GM12878 (cell line): ENCODE measurements at regions of chr12 and their contacts with region 1.

Region 1: GRCh38 chr12:111451649-111452129 is 46.0 kb downstream of the SH2B3 start:
- DNase-seq: no peak
- ATAC-seq: peak; percentile 73
- H3K4me3 ChIP-seq: no peak overlapping the region
- H3K27ac ChIP-seq: no peak overlapping the region
- H3K4me1 ChIP-seq: peaks cover 37% of the 10 kb centered on the region
- H3K27me3 ChIP-seq: no peaks in the 10 kb centered on the region
- CTCF ChIP-seq: peak; percentile 61 to 81 (median 73)
- EP300 ChIP-seq: no peak
- POLR2A ChIP-seq: 0 out of 2 replicates have a peak, but pooled peaks have one; percentile 25
- RAD21 ChIP-seq: peak; percentile 92

Region 2: GRCh38 chr12:110869026-110869425 is 582.7 kb before region 1 on chr12:
- CTCF ChIA-PET with region 1: no interaction called
- POLR2A ChIA-PET with region 1: no interaction called
- RAD21 ChIA-PET with region 1: no interaction called
- SMC1A ChIA-PET with region 1: no interaction called
- in situ Hi-C with region 1: no loop called
- intact Hi-C with region 1: no loop called
- DNase-seq: no peak
- ATAC-seq: no peak
- H3K4me3 ChIP-seq: no peak overlapping the region
- H3K27ac ChIP-seq: no peak overlapping the region
- H3K4me1 ChIP-seq: no peaks in the 10 kb centered on the region
- H3K27me3 ChIP-seq: no peaks in the 10 kb centered on the region; a peak in 1 of 4 replicates
- CTCF ChIP-seq: no peak
- EP300 ChIP-seq: no peak
- POLR2A ChIP-seq: no peak
- RAD21 ChIP-seq: no peak

Region 3: GRCh38 chr12:111224186-111225066 is 227.3 kb before region 1 on chr12:
- CTCF ChIA-PET with region 1: no interaction called
- POLR2A ChIA-PET with region 1: no interaction called
- RAD21 ChIA-PET with region 1: no interaction called
- SMC1A ChIA-PET with region 1: no interaction called
- in situ Hi-C with region 1: no loop called
- intact Hi-C with region 1: no loop called
- DNase-seq: no peak
- ATAC-seq: no peak
- H3K4me3 ChIP-seq: no peak overlapping the region
- H3K27ac ChIP-seq: no peak overlapping the region
- H3K4me1 ChIP-seq: no peaks in the 10 kb centered on the region
- H3K27me3 ChIP-seq: peaks cover 3% of the 10 kb centered on the region in 2 experiments; a peak in 3 of 4 replicates
- CTCF ChIP-seq: no peak
- EP300 ChIP-seq: no peak
- POLR2A ChIP-seq: no peak
- RAD21 ChIP-seq: no peak

Region 4: DNA sequence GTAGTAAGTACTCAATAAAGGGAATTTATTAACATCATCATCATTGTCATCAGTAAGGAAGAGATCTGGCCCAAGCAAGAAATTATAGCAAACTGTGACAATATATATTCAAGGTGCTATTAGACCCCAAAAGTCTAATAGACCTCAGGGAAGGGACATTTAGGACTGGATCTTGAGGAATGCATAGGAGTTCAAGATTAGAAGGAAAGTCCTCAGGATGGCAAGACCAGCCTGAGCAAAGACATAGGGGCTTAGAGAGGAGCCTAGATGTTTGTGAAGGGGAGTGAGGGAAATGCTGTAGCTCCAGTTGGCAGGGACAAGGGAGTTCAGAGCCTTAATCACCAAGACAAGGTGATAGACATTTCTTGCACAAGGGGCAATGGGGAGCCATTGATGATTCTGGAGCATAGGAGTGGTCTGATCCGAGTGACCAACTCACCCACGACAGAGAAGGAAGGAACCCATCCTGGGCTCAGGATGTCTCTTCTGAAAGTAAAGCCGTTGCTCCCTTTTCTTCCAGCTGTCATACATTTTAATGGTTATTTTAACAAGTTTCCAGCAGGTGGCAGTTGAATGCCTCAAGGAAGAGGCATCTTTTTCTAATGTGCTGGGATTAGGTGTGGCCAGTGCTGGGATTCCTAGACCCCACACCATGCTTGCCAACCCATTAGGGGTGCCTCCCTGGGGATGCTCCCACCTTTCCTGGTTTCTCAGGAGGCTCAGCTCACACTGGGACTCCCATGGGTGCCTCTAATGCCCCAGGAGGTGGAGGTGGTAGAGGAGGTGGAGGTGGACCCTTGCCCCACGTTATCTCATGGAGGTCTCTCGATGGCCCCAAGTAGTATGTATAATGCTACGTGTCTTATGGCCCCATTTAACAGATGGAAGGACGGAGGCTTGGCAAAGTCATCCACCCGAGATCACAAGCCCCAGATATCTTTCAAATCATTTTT is 120.6 kb before region 1 on chr12:
- CTCF ChIA-PET with region 1: interaction called, 18 read pairs
- POLR2A ChIA-PET with region 1: no interaction called
- RAD21 ChIA-PET with region 1: interaction called, 16 read pairs
- SMC1A ChIA-PET with region 1: interaction called, 7 read pairs
- in situ Hi-C with region 1: loop called (anchors 5 kb)
- intact Hi-C with region 1: loop called (anchors 2 kb)
- DNase-seq: no peak
- ATAC-seq: peak; percentile 69
- H3K4me3 ChIP-seq: no peak overlapping the region
- H3K27ac ChIP-seq: no peak overlapping the region
- H3K4me1 ChIP-seq: no peaks in the 10 kb centered on the region
- H3K27me3 ChIP-seq: no peaks in the 10 kb centered on the region; a peak in 2 of 4 replicates
- CTCF ChIP-seq: peak; percentile 50 to 62 (median 53)
- EP300 ChIP-seq: no peak
- POLR2A ChIP-seq: no peak
- RAD21 ChIP-seq: peak; percentile 54

Region 5: DNA sequence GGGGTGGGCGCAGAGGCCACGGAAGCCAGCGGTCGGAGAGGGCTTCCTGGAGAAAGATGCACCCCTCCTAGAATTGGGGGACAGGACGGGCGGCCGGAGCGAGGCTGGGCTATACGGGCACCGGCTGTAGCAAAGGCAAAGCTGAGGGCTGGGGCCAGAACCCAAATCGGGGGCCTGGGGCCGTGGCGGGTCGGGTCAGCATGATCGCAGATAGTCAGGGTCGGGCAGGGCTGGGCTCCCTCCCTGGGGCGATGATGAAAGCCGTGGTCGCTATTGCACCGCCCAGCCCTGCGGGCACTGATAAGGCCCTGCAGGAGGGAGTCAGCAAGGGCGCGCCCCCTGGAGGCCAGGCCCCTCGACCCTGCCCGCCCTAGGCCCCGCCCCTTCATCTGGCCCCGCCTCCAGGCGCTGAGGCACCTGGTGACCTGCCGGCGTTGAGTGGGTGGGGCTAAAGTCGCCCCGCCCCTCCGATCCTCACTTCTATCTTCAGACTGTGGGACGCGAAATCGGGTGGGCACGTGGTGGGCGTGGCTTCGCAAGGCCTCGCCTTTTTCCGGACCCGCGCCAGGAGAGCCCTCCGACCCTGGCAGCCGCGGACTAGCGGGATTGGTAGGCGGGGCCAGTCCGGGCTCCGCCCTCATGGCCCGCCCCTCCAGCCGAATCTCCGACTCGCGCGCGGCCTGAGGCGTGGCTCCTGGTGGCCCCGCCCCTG is 46.4 kb before region 1 on chr12:
- CTCF ChIA-PET with region 1: interaction called, 1,117 read pairs
- POLR2A ChIA-PET with region 1: interaction called, 71 read pairs
- RAD21 ChIA-PET with region 1: interaction called, 804 read pairs
- SMC1A ChIA-PET with region 1: interaction called, 605 read pairs
- in situ Hi-C with region 1: loop called (anchors 5 kb)
- intact Hi-C with region 1: no loop called
- DNase-seq: peak; percentile 86
- ATAC-seq: peak; percentile 70
- H3K4me3 ChIP-seq: peak overlapping the region; percentile 86
- H3K27ac ChIP-seq: peak overlapping the region; percentile 91
- H3K4me1 ChIP-seq: peaks cover 49% of the 10 kb centered on the region
- H3K27me3 ChIP-seq: no peaks in the 10 kb centered on the region
- CTCF ChIP-seq: peak; percentile 60 to 70 (median 64); a peak in 5 of 6 replicates
- EP300 ChIP-seq: no peak
- POLR2A ChIP-seq: peak; percentile 85
- RAD21 ChIP-seq: no peak

Region 6: DNA sequence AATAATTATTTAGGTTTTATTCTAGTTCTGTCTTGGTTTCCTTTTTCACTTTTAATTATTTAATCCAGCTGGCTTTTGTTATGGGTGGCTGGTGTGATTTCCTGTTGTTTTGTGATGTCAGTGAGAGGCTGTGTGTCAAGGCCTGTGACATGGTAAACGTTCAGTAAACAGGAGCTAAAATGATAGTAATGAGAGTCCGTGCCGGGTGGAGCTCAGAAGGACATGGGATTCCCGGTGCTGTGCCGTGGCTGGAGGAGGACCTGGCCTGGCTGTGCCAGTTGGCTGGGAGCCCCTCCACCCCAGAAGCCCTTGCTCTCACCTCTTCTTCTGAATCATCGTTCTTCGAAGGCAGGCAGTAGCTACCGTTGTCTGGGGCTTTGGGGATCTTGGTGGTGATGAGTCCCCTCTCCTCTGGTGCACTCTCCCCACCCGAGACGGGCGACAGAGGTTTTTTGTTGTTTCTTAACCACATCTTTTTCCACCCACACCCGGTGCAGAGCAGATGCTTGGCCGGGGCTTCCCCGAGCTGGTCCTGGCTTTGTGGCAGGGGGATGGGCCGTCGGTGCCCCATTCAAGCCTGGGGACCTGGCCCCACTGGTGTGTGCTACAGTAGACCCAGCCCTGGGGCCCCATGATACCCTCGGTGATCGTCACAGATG is 16.9 kb before region 1 on chr12:
- CTCF ChIA-PET with region 1: interaction called, 160 read pairs
- POLR2A ChIA-PET with region 1: interaction called, 80 read pairs
- RAD21 ChIA-PET with region 1: interaction called, 43 read pairs
- SMC1A ChIA-PET with region 1: interaction called, 86 read pairs
- in situ Hi-C with region 1: no loop called
- intact Hi-C with region 1: no loop called
- DNase-seq: peak; percentile 84
- ATAC-seq: peak; percentile 72
- H3K4me3 ChIP-seq: peak overlapping the region; percentile 65
- H3K27ac ChIP-seq: peak overlapping the region; percentile 95
- H3K4me1 ChIP-seq: peaks cover 91% of the 10 kb centered on the region
- H3K27me3 ChIP-seq: no peaks in the 10 kb centered on the region
- CTCF ChIP-seq: no peak
- EP300 ChIP-seq: peak; percentile 47 to 60; a peak in 3 of 4 replicates
- POLR2A ChIP-seq: peak; percentile 67
- RAD21 ChIP-seq: no peak

Region 7: DNA sequence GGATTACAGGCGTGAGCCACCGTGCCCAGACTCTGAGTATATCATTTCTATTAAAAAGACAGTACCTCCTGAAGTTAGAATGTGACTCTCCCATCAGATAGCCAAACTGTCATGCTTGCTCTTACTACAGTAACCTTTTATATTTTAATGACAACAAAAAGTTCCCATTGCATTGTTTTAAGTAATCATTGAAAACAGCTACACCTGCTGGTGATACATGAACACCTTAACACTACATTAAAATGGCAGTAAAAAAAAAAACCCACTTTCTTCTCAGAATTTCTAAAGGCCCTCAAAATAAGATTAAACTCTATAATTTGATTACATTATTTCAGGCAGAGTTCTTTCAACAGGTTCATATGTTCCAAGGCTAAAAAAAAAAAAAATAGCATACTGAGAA is 30.8 kb after region 1 on chr12:
- CTCF ChIA-PET with region 1: interaction called, 19 read pairs
- POLR2A ChIA-PET with region 1: interaction called, 9 read pairs
- RAD21 ChIA-PET with region 1: interaction called, 5 read pairs
- SMC1A ChIA-PET with region 1: interaction called, 6 read pairs
- in situ Hi-C with region 1: no loop called
- intact Hi-C with region 1: no loop called
- DNase-seq: no peak
- ATAC-seq: no peak
- H3K4me3 ChIP-seq: no peak overlapping the region
- H3K27ac ChIP-seq: no peak overlapping the region
- H3K4me1 ChIP-seq: no peaks in the 10 kb centered on the region
- H3K27me3 ChIP-seq: no peaks in the 10 kb centered on the region
- CTCF ChIP-seq: peak; percentile 19 to 35 (median 29); a peak in 2 of 6 replicates
- EP300 ChIP-seq: no peak
- POLR2A ChIP-seq: no peak
- RAD21 ChIP-seq: peak; percentile 34